Activated CD4-positive, alpha-beta memory T cell treated with anti-CD3 and anti-CD28 coated beads, Interleukin-2, amount 10 ng/mL, durations not matched to agents 7 days and 5 days (primary cell): ENCODE measurements at regions of chr12 and their contacts with region 1.

Region 1: GRCh38 chr12:12486661-12487240 is 75.9 kb downstream of the DUSP16 start:
- DNase-seq: no peak
- H3K4me3 Mint-ChIP-seq: no peak overlapping the region
- H3K27ac Mint-ChIP-seq: peak overlapping the region; percentile 77
- H3K4me1 Mint-ChIP-seq: peaks cover 66% of the 10 kb centered on the region
- H3K27me3 Mint-ChIP-seq: no peaks in the 10 kb centered on the region

Region 2: GRCh38 chr12:12384571-12385340 is 102.0 kb before region 1 on chr12:
- CTCF ChIA-PET with region 1: interaction called, 8 read pairs
- POLR2A ChIA-PET with region 1: interaction called, 238 read pairs
- DNase-seq: peak; percentile 85
- H3K4me3 Mint-ChIP-seq: peak overlapping the region; percentile 57
- H3K27ac Mint-ChIP-seq: peak overlapping the region; percentile 97
- H3K4me1 Mint-ChIP-seq: peaks cover 83% of the 10 kb centered on the region
- H3K27me3 Mint-ChIP-seq: no peaks in the 10 kb centered on the region

Region 3: DNA sequence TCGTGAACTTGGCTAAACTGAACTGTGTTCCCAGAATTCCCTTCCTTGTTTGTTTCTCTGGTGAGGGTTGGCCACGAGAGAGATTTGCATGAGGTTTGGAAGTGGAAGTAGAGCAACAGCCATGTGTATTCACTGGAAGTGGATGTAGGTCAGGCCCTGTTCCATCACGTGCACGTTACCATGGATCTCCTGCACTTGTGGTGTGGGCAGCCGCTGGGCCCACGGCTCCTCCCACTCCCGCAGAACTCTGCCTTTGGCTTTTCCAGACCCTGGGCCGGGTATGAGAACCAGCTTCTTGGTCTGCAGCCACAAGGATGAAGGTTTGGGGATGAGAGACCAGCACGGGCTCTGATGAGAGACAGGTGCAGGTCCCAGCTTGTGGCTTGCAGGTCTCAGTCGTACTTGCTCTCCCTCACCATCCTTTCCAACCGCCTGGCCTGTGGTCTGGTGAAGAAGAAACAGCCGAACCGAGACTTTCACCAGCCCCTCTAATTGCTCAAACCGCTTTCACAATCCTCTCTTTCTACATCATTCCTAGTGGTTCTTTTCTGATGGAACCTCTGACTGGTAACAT is 19.0 kb before region 1 on chr12:
- CTCF ChIA-PET with region 1: interaction called, 7 read pairs
- POLR2A ChIA-PET with region 1: interaction called, 579 read pairs
- DNase-seq: peak; percentile 77
- H3K4me3 Mint-ChIP-seq: peak overlapping the region; percentile 40
- H3K27ac Mint-ChIP-seq: peak overlapping the region; percentile 97
- H3K4me1 Mint-ChIP-seq: peaks cover 87% of the 10 kb centered on the region
- H3K27me3 Mint-ChIP-seq: no peaks in the 10 kb centered on the region

Region 4: DNA sequence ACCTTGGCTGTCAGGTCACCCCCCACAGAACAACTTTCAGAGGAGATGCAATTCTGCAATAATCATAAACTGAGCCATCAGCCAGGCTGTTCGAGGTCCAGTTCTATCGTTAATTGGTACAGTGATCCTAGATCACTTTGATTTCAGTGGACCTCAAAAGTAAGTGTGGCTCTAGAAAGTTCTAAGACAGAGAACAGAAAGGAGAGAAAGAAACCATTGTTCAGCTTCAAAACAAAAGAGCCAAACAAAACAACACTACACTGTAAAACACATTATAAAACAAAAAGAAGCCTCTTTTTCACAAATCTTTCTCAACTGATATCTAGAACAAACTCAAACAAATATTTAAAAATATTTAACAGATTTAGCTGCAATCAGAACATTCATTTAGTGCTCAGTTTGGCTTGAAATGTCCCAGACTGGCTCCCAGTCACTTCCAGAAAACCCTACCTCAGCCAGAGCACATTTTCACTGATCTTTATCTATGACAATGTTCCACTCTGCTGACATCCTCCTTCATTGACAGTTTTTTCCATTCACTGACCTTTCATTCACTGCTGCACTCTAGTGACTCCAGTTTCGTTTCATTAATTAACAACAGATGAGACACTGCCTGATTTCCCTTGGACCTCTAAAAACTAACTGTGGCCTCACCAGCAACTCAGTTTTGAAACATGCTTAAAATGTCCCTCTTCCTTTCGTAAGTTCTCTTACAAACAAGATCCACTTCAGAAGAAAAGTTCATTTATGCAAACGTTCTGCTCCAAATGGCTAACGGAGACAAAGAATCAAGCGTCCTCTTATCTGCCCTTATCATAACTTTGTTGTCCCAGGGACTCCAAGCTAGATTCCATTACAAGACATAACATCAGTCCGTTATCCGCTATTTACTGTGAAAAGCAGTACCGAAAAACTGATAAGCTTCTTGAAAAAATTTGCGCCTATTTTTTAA is 19.1 kb after region 1 on chr12:
- CTCF ChIA-PET with region 1: interaction called, 14 read pairs
- POLR2A ChIA-PET with region 1: interaction called, 174 read pairs
- DNase-seq: no peak
- H3K4me3 Mint-ChIP-seq: peak overlapping the region; percentile 65
- H3K27ac Mint-ChIP-seq: peak overlapping the region; percentile 81
- H3K4me1 Mint-ChIP-seq: peaks cover 76% of the 10 kb centered on the region
- H3K27me3 Mint-ChIP-seq: no peaks in the 10 kb centered on the region

Region 5: DNA sequence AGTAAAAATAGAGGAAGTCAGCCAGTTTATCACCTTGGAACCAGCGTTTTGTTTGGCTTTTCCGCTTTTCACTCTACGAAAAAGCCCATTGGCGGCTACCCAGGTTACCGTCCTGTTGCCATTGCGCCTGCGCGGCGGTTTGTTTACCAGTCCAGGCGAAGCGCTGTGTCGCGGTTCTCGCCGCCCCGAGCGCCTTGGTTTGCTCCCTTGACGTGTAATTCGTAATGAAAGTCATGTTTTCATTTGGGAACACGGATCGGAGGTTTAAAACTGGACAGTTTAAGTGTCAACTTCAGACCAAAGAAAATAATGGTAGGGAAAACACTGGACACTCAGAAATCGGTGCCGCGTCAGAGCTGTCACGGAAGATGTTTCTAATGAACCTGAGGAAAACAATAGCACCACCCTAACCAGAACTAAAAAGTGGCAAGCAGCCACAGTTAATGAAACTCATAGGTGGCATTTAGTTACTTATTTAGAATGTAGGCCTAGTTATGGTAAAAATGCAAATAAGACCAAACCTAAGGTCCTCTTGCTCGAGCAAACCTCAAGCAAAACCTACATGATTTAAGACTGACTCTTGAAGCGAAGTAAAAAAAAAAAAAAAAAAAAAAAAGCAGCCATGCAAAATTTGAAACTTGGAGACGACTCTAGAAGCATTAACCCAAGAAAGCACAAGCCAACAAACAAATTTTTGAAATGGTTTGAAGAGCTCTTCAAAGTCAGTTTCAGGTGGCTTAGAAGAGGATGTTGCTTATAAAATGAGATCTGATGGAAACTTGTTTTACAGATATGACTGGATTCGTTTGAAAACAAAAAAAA is 210.0 kb after region 1 on chr12:
- CTCF ChIA-PET with region 1: no interaction called
- POLR2A ChIA-PET with region 1: interaction called, 31 read pairs
- DNase-seq: peak; percentile 93
- H3K4me3 Mint-ChIP-seq: peak overlapping the region; percentile 83
- H3K27ac Mint-ChIP-seq: peak overlapping the region; percentile 100
- H3K4me1 Mint-ChIP-seq: peaks cover 63% of the 10 kb centered on the region
- H3K27me3 Mint-ChIP-seq: no peaks in the 10 kb centered on the region